ENCODE measurements at regions of chr17 and their contacts with region 1.

Region 1: DNA sequence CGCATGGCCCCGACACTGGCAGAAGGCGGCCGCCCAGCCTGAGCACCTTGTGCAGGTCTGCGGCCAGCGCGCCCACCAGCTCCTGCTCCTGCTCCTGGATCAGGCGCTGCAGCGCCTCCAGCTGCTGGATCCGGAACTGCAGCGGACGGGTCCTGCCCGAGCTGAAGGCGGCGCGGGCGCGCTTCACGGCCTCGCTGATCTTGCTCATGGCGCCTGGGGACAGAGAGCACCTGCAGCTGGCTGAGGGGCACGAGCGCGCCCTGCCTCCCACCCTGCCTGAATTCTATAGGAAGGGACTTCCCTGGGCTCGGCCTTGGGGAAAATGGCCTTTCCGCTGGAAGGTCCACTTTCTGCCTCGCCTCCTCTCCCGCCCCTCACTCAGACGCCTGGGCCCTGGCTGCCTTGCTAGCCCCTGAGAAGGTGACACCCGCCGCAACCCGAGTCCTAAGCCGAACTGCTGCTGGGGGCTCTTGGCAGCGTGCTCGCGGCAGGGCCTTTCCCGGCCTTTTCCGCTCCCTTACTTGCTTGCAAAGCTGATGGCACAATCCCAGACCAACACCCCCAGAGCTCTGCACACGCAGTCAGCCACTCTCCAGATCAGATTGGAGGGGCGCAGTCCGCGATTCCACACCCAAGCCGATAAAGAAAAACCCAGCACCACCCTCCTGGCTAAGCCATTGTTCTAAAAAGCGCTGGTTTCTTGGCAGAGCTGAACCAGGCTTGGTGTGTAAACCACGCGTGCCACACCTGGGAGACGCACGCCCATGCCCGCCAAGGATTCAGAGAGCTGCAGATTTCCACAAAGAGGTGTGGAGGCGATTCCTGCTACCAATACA is 3.0 kb downstream of the ALDH3A1 start:
- DNase-seq: peak; percentile 91
- ATAC-seq: peak; percentile 94
- H3K4me3 Mint-ChIP-seq: peak overlapping the region; percentile 64
- H3K27ac Mint-ChIP-seq: no peak overlapping the region
- H3K4me1 Mint-ChIP-seq: peaks cover 8% of the 10 kb centered on the region
- H3K27me3 Mint-ChIP-seq: peaks cover 5% of the 10 kb centered on the region

Region 2: GRCh38 chr17:19544366-19544765 is 200.8 kb before region 1 on chr17:
- CTCF ChIA-PET with region 1: no interaction called
- POLR2A ChIA-PET with region 1: no interaction called
- DNase-seq: no peak
- ATAC-seq: no peak
- H3K4me3 Mint-ChIP-seq: no peak overlapping the region
- H3K27ac Mint-ChIP-seq: no peak overlapping the region
- H3K4me1 Mint-ChIP-seq: no peaks in the 10 kb centered on the region
- H3K27me3 Mint-ChIP-seq: peaks cover 6% of the 10 kb centered on the region

Region 3: GRCh38 chr17:19656851-19657581 is 88.1 kb before region 1 on chr17:
- CTCF ChIA-PET with region 1: interaction called, 11 read pairs
- POLR2A ChIA-PET with region 1: no interaction called
- DNase-seq: no peak
- ATAC-seq: no peak
- H3K4me3 Mint-ChIP-seq: peak overlapping the region; percentile 59
- H3K27ac Mint-ChIP-seq: peak overlapping the region; percentile 75
- H3K4me1 Mint-ChIP-seq: peaks cover 29% of the 10 kb centered on the region
- H3K27me3 Mint-ChIP-seq: no peaks in the 10 kb centered on the region

Region 4: DNA sequence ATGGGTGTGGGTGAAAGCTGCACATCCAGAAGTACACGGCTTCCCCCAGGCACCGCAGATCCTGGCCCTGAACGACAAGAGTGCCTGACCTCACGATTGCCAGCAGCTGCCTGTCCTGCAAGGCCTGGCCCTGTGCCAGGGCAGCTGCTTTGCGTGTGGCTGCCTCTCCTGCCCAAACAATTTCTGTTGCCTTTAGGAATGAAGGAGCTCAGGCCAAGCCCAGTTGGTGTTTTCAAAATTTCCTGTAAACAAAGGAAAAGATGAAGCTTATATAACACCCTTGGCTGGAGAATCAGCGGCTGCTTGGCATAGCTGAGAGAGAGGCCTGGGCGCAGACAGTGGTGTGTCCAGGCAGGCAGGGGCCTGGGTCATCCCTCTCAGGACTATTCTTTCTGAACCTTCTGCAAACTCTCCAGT is 17.1 kb before region 1 on chr17:
- CTCF ChIA-PET with region 1: interaction called, 16 read pairs
- POLR2A ChIA-PET with region 1: no interaction called
- DNase-seq: no peak
- ATAC-seq: no peak
- H3K4me3 Mint-ChIP-seq: no peak overlapping the region
- H3K27ac Mint-ChIP-seq: no peak overlapping the region
- H3K4me1 Mint-ChIP-seq: peaks cover 8% of the 10 kb centered on the region
- H3K27me3 Mint-ChIP-seq: no peaks in the 10 kb centered on the region

Region 5: DNA sequence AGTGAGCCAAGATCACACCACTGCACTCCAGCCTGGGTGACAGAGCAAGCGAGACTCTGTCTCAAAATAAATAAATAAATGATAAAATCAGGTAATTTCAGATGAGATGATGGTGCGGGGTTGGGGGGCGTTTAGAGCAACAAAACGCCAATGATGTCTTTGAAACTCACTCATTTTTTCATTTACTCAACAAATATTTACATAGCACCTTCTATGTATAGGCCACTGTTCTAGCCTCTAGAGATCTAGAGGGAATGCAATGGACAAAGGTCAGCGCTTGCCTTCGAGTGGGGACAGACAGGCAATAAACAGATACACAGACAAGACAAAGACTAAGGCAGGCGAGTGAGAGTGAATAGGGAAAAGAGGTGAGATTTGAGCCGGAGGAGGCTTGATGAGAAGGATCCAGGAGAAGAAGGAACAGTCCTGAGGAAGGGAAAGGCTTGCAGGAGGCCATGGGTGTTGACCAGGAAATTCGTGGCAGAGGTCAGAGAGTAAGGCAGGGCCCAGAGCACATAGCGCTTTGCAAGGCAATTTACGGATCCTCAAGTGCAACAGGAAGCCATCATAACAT is 11.1 kb before region 1 on chr17:
- CTCF ChIA-PET with region 1: interaction called, 16 read pairs
- POLR2A ChIA-PET with region 1: no interaction called
- DNase-seq: no peak
- ATAC-seq: no peak
- H3K4me3 Mint-ChIP-seq: no peak overlapping the region
- H3K27ac Mint-ChIP-seq: no peak overlapping the region
- H3K4me1 Mint-ChIP-seq: no peaks in the 10 kb centered on the region
- H3K27me3 Mint-ChIP-seq: peaks cover 4% of the 10 kb centered on the region

Region 6: DNA sequence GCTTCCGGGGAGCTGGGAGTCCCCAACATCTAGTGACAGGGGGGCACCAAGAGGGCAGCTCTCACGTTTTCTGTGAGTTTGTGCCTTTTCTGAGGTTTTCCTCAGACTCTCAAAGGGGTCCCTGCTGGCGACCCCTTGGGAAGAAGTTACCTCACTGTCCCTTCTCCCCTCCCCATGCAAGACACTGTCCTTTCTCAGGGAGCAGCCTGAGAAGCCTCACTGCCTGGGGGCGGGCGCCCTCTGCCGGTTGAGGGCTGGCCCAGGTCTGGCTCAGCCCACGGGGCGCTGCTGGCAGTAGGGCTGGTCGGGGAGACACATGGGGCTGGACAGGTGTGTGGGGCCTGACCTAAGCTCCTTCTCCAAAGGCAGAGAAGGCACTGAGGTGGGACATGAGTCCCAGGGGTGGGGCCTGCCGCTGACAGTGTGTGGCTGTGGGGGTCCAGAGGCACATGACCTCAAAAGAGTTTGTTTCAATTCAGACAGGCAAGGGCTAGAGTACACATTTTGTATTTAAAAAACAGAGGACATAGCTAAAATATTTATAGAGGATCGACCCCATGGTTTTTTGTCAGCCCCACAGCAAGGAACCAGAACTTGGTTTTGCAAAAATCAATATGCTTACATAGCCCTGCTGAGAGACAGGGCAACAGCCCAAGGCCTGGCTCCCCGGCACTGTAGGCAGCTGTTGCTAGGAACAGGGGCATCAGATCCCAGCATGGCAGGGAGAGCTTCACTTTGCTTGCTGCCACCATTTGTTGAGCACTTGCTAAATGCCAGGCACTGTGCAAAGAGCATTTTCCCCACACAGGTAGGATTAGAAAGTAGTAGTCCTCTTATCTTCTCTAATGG is 21.5 kb after region 1 on chr17:
- CTCF ChIA-PET with region 1: interaction called, 18 read pairs
- POLR2A ChIA-PET with region 1: interaction called, 5 read pairs
- DNase-seq: peak; percentile 76
- ATAC-seq: peak; percentile 96
- H3K4me3 Mint-ChIP-seq: no peak overlapping the region
- H3K27ac Mint-ChIP-seq: no peak overlapping the region
- H3K4me1 Mint-ChIP-seq: peaks cover 8% of the 10 kb centered on the region
- H3K27me3 Mint-ChIP-seq: no peaks in the 10 kb centered on the region